ENCODE measurements at regions of chr1 and their contacts with region 1.

Region 1: GRCh38 chr1:67227196-67227595 is 60.9 kb downstream of the IL23R start:
- DNase-seq: no peak
- ATAC-seq: no peak
- H3K4me3 ChIP-seq: no peak overlapping the region
- H3K27ac ChIP-seq: no peak overlapping the region
- H3K4me1 ChIP-seq: no peaks in the 10 kb centered on the region
- H3K27me3 ChIP-seq: no peaks in the 10 kb centered on the region
- CTCF ChIP-seq: no peak
- EP300 ChIP-seq: no peak
- POLR2A ChIP-seq: no peak
- RAD21 ChIP-seq: no peak

Region 2: DNA sequence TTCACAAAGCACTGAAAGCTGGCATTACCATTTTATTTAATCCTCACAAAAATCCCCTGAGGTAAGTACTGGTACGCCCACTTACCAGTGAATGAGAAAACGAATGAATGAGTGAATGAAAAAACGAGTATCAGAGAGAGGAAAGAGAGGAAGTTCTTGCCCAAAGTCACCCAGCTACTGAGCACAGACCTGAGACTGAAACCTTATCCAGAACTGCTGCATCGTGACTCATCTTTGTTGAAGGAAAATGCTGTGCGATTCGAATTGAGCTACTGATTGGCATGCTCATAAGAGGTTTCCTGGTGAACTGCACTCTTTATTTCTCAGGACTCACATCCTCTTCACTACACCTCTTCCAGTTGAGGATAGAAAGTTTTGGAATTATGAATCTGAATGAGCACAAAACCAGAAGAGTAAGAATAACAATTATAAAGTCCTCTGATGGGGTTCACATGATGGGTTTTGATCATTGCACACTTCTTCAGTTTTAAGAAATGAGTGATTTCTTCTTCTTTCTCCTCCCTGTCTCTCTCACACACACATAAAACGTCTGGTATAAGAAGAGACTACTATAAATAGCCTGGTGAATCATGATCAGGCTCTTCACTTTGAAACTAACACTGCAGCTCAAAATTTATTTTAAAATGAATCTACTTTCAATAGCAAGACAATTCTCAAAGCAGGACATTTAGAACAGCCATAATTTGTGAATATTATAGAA is 112.6 kb after region 1 on chr1:
- CTCF ChIA-PET with region 1: no interaction called
- POLR2A ChIA-PET with region 1: no interaction called
- in situ Hi-C with region 1: no loop called
- intact Hi-C with region 1: loop called (anchors 5 kb)
- DNase-seq: peak in 2 of 4 experiments; percentile 29 to 55
- ATAC-seq: peak; percentile 82
- H3K4me3 ChIP-seq: no peak overlapping the region
- H3K27ac ChIP-seq: no peak overlapping the region
- H3K4me1 ChIP-seq: peaks cover 0 to 5% of the 10 kb centered on the region in 2 experiments; a peak in 2 of 5 replicates
- H3K27me3 ChIP-seq: no peaks in the 10 kb centered on the region; a peak in 1 of 5 replicates
- CTCF ChIP-seq: no peak
- EP300 ChIP-seq: no peak
- POLR2A ChIP-seq: no peak
- RAD21 ChIP-seq: no peak

Region 3: DNA sequence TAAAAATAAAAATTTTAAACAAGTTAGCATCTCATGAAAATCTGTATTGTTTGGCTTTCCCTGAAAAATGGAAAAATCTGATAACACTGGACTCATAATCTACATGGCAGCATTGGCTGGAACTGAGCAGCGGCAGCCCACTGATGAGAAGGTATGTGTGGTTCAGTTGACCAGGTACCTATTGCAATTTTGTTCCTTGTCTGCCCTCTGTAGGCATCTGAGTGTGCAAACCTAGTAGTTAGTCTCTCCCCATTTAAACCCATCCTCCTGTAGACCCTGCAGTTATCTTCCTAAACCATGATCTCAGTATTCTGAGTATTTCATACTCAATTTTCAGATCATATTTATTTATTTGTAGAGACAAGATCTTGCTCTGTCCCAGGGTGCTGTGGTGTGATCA is 262.4 kb after region 1 on chr1:
- CTCF ChIA-PET with region 1: no interaction called
- POLR2A ChIA-PET with region 1: no interaction called
- in situ Hi-C with region 1: loop called (anchors 5 kb)
- intact Hi-C with region 1: no loop called
- DNase-seq: peak in 3 of 4 experiments; percentile 19 to 61 (median 60)
- ATAC-seq: peak; percentile 92
- H3K4me3 ChIP-seq: no peak overlapping the region
- H3K27ac ChIP-seq: no peak overlapping the region
- H3K4me1 ChIP-seq: peaks cover 0 to 5% of the 10 kb centered on the region in 2 experiments; a peak in 3 of 5 replicates
- H3K27me3 ChIP-seq: no peaks in the 10 kb centered on the region
- CTCF ChIP-seq: peak; percentile 41 to 76 (median 49); a peak in 5 of 6 replicates
- EP300 ChIP-seq: no peak
- POLR2A ChIP-seq: no peak
- RAD21 ChIP-seq: peak; percentile 55 to 89